Heart left ventricle (tissue), 16 donors: ENCODE measurements at regions of chr1 and their contacts with region 1.

Region 1: GRCh38 chr1:206635080-206635977 is at the start of gene DYRK3:
- DNase-seq: peak; percentile 96 to 97 (median 97)
- ATAC-seq: peak; percentile 94 to 99 (median 98)
- H3K4me3 ChIP-seq: peak within 1 kb of the TSS; percentile 73 to 97 (median 90)
- H3K27ac ChIP-seq: peak within 1 kb of the TSS; percentile 19 to 95 (median 89)
- H3K4me1 ChIP-seq: peaks cover 0 to 54% (median 26%) of the 10 kb centered on the region in 12 donors
- H3K27me3 ChIP-seq: no peaks in the 10 kb centered on the region
- CTCF ChIP-seq: peak in 6 of 12 donors; percentile 9 to 41 (median 29)
- POLR2A ChIP-seq: peak; percentile 41 to 99
- total RNA-seq, gene DYRK3: 11.2 to 32.5 (median 15.9) TPM

Region 2: DNA sequence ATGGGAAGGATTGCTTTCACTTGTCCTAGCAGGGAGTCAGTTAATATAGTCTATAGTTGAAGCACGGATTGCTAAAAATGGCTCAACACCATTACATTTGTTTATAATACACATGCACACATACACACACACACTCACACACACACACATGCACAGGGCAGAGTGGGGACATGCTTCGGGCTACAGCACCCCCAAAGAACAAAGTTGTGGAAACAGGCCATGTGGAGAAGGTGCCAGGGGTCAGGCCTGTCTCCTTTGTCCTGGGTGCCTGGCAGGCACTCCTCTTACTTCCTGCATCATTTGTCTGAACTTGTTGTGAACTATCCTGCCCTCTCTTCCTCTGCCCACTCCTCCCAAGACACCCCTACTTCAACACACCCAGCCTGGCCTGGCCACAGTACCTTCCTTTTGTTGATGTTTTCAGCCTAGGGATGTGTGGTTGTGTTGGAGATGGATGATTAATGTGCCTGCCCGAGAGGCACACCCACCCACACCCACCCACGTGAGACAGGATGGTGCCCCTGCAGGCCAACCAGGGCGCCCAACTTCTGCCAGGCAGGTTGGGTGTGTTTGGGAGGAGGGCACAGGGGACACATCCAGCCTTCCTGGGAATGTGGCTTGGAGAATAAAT is 110.5 kb before region 1 on chr1:
- intact Hi-C with region 1: no loop called
- DNase-seq: peak in 1 of 5 donors; percentile 8
- ATAC-seq: no peak
- H3K4me3 ChIP-seq: no peak overlapping the region
- H3K27ac ChIP-seq: no peak overlapping the region
- H3K4me1 ChIP-seq: peaks cover 0 to 7% (median 0%) of the 10 kb centered on the region in 12 donors
- H3K27me3 ChIP-seq: no peaks in the 10 kb centered on the region
- CTCF ChIP-seq: no peak
- POLR2A ChIP-seq: no peak

Region 3: DNA sequence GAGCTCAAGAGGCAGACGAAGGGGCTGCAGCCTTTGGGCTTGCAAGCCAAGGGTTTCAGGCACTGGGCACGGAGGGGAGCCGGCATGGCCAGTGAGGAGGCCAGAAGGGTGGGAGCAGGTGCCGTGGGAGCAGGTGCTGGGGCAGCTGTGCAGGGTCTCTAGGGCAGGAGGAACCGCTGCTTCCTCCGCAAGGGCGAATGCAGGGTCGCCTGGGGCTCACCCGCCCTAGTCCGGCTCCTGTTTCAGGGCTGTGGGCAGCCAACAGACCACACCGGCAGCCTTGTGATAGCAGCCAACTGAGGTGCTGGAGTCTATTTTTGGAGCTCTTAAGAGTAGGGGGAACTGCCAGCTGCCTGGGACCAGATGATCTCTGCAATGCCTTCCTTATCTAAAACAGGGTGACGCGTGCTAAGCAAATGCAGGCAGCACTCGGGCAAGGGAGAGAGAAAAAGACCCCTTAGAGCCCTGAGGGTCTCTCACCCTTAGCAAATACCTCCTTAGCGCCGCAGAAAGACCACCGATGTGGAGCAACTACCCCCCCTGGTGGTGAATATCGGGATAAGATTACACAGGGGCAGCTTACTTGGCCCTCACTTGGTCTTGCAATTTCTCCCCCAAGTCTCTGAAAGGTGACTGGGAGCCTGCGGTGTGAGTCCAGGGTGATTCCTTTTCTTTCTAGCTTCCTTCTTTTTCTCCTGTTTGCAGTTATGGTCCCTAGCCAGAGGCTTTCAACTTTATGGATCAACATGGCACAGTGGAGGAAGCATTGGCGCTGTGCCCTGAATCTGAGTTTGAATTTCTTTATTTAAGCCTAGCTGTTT is 28.7 kb after region 1 on chr1:
- intact Hi-C with region 1: loop called (anchors 1 to 2 kb)
- DNase-seq: peak; percentile 75 to 86 (median 76)
- ATAC-seq: peak; percentile 71 to 80 (median 76)
- H3K4me3 ChIP-seq: peak overlapping the region in 10 of 12 donors; percentile 1 to 46 (median 30)
- H3K27ac ChIP-seq: peak overlapping the region; percentile 78 to 96 (median 88)
- H3K4me1 ChIP-seq: peaks cover 0 to 62% (median 27%) of the 10 kb centered on the region in 12 donors
- H3K27me3 ChIP-seq: peaks cover 0 to 10% (median 0%) of the 10 kb centered on the region in 9 donors
- CTCF ChIP-seq: peak; percentile 67 to 90 (median 84)
- POLR2A ChIP-seq: peak in 1 of 2 donors; percentile 59

Region 4: DNA sequence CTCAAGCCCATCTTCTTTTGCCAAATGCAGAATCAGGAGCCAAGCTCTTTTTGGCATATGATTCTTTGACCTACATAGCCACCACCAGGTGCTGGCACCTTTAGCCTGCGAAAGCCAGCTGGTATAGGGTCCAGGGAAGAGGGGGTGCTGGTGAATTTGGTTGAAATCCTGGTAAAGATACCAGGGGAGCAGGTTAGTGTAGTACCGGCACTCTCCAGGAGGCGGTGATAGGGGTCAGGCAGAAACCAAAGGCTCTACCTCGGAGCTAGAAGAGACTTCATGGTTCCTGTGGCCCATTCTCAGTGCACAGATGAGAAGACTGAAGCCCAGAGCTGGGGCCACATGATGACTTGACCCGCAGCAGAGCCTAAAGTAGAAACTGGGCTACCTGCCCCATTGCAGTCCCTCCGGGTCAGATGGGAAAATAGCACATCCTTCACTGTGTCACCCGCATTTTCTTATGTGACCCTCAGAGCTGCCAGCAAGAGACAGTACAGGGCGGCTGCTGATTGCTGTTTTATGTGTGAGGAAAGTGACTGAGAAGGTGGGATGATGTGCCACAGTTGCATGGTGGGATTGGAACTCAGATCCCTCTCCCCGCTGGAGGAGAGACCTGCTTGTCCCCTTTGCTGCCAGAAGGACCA is 99.3 kb after region 1 on chr1:
- intact Hi-C with region 1: loop called in 8 of 10 experiments (anchors 5 to 10 kb)
- DNase-seq: no peak
- ATAC-seq: peak in 3 of 4 donors; percentile 11 to 37 (median 19)
- H3K4me3 ChIP-seq: no peak overlapping the region
- H3K27ac ChIP-seq: peak overlapping the region in 2 of 12 donors; percentile 6 to 60
- H3K4me1 ChIP-seq: peaks cover 0 to 64% (median 36%) of the 10 kb centered on the region in 12 donors
- H3K27me3 ChIP-seq: no peaks in the 10 kb centered on the region
- CTCF ChIP-seq: peak; percentile 42 to 74 (median 65)
- POLR2A ChIP-seq: no peak

Region 5: DNA sequence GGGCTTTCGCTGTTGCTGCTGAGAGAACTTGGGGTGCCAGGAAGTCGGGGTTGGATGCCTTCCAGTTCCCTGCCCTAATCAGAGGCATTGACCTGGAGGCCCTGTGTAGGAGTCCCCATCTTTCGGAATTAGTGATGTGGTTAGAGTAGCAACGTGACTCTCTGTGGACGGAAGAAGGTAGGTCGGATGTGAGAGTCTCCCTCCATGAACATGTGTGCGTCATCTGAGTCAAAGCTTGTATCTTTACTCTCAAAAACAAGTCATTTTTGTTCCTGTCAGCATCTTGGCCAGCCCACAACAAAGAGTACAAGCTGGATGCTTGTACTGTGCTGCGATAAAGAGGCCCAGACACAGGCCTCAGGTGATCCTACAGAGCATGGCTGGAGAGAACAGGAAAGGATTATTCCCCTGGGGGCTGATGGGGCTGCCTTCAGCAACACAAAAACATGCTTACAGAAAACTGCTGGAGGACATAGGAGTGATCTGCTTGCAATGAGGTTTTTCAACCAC is 167.9 kb after region 1 on chr1:
- intact Hi-C with region 1: loop called in 8 of 10 experiments (anchors 2 to 5 kb)
- DNase-seq: no peak
- ATAC-seq: peak in 2 of 4 donors; percentile 18 to 62
- H3K4me3 ChIP-seq: no peak overlapping the region
- H3K27ac ChIP-seq: peak overlapping the region in 1 of 12 donors; percentile 82
- H3K4me1 ChIP-seq: peaks cover 0 to 29% (median 0%) of the 10 kb centered on the region in 12 donors
- H3K27me3 ChIP-seq: no peaks in the 10 kb centered on the region
- CTCF ChIP-seq: no peak
- POLR2A ChIP-seq: no peak

Region 6: GRCh38 chr1:206808615-206809014 is 173.3 kb after region 1 on chr1:
- intact Hi-C with region 1: loop called (anchors 1 to 5 kb)
- DNase-seq: no peak
- ATAC-seq: peak; percentile 51 to 80 (median 78)
- H3K4me3 ChIP-seq: no peak overlapping the region
- H3K27ac ChIP-seq: no peak overlapping the region
- H3K4me1 ChIP-seq: peaks cover 0 to 18% (median 0%) of the 10 kb centered on the region in 12 donors
- H3K27me3 ChIP-seq: no peaks in the 10 kb centered on the region
- CTCF ChIP-seq: peak; percentile 15 to 54 (median 38)
- POLR2A ChIP-seq: no peak

Region 7: DNA sequence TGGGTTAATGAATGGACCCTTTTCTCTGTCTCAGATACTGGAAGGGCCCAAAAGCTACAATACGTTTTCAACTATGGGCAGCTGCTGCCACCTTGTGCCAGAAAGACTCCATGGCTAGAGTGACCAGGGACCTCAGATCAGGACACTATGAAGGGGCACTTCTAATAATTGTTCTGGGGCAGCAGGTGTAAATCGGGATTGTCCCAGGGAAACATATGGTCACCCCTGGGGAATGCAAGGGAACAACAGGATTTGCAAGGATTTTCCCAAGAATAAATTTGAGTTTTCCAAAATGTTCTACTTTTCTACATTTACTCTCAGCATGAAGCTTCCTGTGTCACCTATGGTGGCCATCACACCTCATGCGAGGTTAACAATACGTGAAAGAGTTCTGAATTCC is 346.9 kb after region 1 on chr1:
- intact Hi-C with region 1: loop called in 7 of 10 experiments (anchors 5 to 10 kb)
- DNase-seq: peak in 3 of 5 donors; percentile 35 to 44 (median 35)
- ATAC-seq: peak; percentile 62 to 84 (median 82)
- H3K4me3 ChIP-seq: no peak overlapping the region
- H3K27ac ChIP-seq: no peak overlapping the region
- H3K4me1 ChIP-seq: peaks cover 0 to 5% (median 0%) of the 10 kb centered on the region in 12 donors
- H3K27me3 ChIP-seq: peaks cover 0 to 13% (median 0%) of the 10 kb centered on the region in 9 donors
- CTCF ChIP-seq: peak; percentile 23 to 70 (median 56)
- POLR2A ChIP-seq: no peak